IMR-90 (cell line): ENCODE measurements at regions of chr5 and their contacts with region 1.

Region 1: DNA sequence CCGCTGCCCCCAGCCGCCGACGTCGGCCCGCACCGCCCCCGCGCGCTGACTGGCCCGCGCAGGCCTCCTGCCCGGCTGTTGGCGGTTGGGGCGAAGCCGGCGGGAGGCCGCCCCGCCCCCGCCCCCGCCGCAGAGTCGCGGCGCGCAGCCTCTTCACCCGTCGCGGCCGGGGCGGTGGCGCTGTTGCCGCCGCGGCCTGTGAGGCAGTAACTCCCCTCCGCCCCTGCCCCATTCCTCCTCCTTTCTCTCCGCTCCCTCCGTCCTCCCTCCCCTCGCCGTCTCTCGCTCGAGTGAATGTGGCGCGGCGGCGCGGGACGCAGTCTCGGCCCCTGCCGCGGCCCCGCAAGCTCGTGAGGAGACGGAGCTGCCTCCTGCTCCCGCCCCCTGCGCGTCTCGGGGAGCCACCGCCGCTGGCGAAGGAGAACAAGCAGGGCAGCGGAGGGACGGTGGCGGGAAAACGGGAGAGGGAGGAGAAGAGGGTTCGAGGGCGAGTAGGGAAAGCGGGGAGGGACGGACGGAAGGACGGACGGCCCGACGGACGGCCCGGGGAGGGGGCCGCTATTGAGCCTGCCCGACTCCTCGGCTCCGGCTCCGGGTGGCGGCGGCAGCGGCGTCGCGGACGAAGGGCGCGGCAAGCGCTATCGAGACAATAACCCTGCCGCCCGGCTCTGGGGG is 637 bp upstream of the ERBIN start:
- DNase-seq: peak; percentile 85
- ATAC-seq: peak; percentile 87
- H3K4me3 ChIP-seq: peak overlapping the region; percentile 75
- H3K27ac ChIP-seq: peak overlapping the region; percentile 100
- H3K4me1 ChIP-seq: no peaks in the 10 kb centered on the region
- H3K27me3 ChIP-seq: no peaks in the 10 kb centered on the region
- CTCF ChIP-seq: peak; percentile 51
- POLR2A ChIP-seq: peak; percentile 86
- RAD21 ChIP-seq: 0 out of 2 replicates have a peak, but pooled peaks have one; percentile 21

Region 2: GRCh38 chr5:65721720-65722574 is 203.8 kb before region 1 on chr5 and contains the starts of genes NLN and SGTB:
- CTCF ChIA-PET with region 1: no interaction called
- POLR2A ChIA-PET with region 1: interaction called, 3 read pairs
- dilution Hi-C with region 1: no loop called
- in situ Hi-C with region 1: no loop called
- intact Hi-C with region 1: loop called (anchors 1 kb)
- DNase-seq: peak; percentile 66
- ATAC-seq: peak; percentile 95
- H3K4me3 ChIP-seq: peak within 1 kb of the TSS; percentile 98
- H3K27ac ChIP-seq: peak within 1 kb of the TSS; percentile 73
- H3K4me1 ChIP-seq: peaks cover 4% of the 10 kb centered on the region
- H3K27me3 ChIP-seq: no peaks in the 10 kb centered on the region
- CTCF ChIP-seq: no peak
- POLR2A ChIP-seq: no peak; the same call in 1 of the 2 replicates
- RAD21 ChIP-seq: no peak
- total RNA-seq, gene NLN: 37.1 and 50.3 TPM in 2 replicates
- total RNA-seq, gene SGTB: 15.1 and 25.6 TPM in 2 replicates

Region 3: GRCh38 chr5:65801352-65801783 is 124.4 kb before region 1 on chr5:
- CTCF ChIA-PET with region 1: no interaction called
- POLR2A ChIA-PET with region 1: interaction called, 4 read pairs
- dilution Hi-C with region 1: no loop called
- in situ Hi-C with region 1: no loop called
- intact Hi-C with region 1: loop called (anchors 5 kb)
- DNase-seq: peak; percentile 77
- ATAC-seq: peak; percentile 91
- H3K4me3 ChIP-seq: no peak overlapping the region
- H3K27ac ChIP-seq: no peak overlapping the region
- H3K4me1 ChIP-seq: peaks cover 11% of the 10 kb centered on the region
- H3K27me3 ChIP-seq: no peaks in the 10 kb centered on the region
- CTCF ChIP-seq: no peak
- POLR2A ChIP-seq: no peak
- RAD21 ChIP-seq: no peak

Region 4: GRCh38 chr5:66041627-66042026 is 115.9 kb after region 1 on chr5:
- CTCF ChIA-PET with region 1: no interaction called
- POLR2A ChIA-PET with region 1: no interaction called
- dilution Hi-C with region 1: no loop called
- in situ Hi-C with region 1: no loop called
- intact Hi-C with region 1: loop called (anchors 5 kb)
- DNase-seq: peak; percentile 9
- ATAC-seq: peak; percentile 66
- H3K4me3 ChIP-seq: no peak overlapping the region
- H3K27ac ChIP-seq: no peak overlapping the region
- H3K4me1 ChIP-seq: peaks cover 2% of the 10 kb centered on the region
- H3K27me3 ChIP-seq: no peaks in the 10 kb centered on the region
- CTCF ChIP-seq: no peak
- POLR2A ChIP-seq: no peak
- RAD21 ChIP-seq: no peak

Region 5: GRCh38 chr5:66222455-66222854 is 296.7 kb after region 1 on chr5:
- CTCF ChIA-PET with region 1: no interaction called
- POLR2A ChIA-PET with region 1: no interaction called
- dilution Hi-C with region 1: no loop called
- in situ Hi-C with region 1: no loop called
- intact Hi-C with region 1: no loop called
- DNase-seq: no peak
- ATAC-seq: peak; percentile 70
- H3K4me3 ChIP-seq: no peak overlapping the region
- H3K27ac ChIP-seq: no peak overlapping the region
- H3K4me1 ChIP-seq: no peaks in the 10 kb centered on the region
- H3K27me3 ChIP-seq: no peaks in the 10 kb centered on the region; the same call in none of the 2 replicates
- CTCF ChIP-seq: no peak
- POLR2A ChIP-seq: no peak
- RAD21 ChIP-seq: no peak

Region 6: GRCh38 chr5:66306105-66306843 is 380.5 kb after region 1 on chr5:
- CTCF ChIA-PET with region 1: no interaction called
- POLR2A ChIA-PET with region 1: no interaction called
- dilution Hi-C with region 1: no loop called
- in situ Hi-C with region 1: no loop called
- intact Hi-C with region 1: no loop called
- DNase-seq: peak; percentile 63
- ATAC-seq: peak; percentile 97
- H3K4me3 ChIP-seq: no peak overlapping the region
- H3K27ac ChIP-seq: no peak overlapping the region
- H3K4me1 ChIP-seq: no peaks in the 10 kb centered on the region
- H3K27me3 ChIP-seq: peaks cover 5% of the 10 kb centered on the region
- CTCF ChIP-seq: peak; percentile 80
- POLR2A ChIP-seq: no peak
- RAD21 ChIP-seq: peak; percentile 42